ENCODE measurements at regions of chr18 and their contacts with region 1.

Region 1: GRCh38 chr18:55763298-55763697 is 175.3 kb upstream of the TCF4 start:
- DNase-seq: no peak
- H3K4me3 ChIP-seq: no peak overlapping the region
- CTCF ChIP-seq: no peak

Region 2: GRCh38 chr18:55706898-55707297 is 56.4 kb before region 1 on chr18:
- in situ Hi-C with region 1: loop called (anchors 5 kb)
- DNase-seq: no peak
- H3K4me3 ChIP-seq: no peak overlapping the region
- CTCF ChIP-seq: no peak

Region 3: GRCh38 chr18:55811925-55812324 is 48.6 kb after region 1 on chr18:
- in situ Hi-C with region 1: no loop called
- DNase-seq: no peak
- H3K4me3 ChIP-seq: no peak overlapping the region
- CTCF ChIP-seq: no peak

Region 4: DNA sequence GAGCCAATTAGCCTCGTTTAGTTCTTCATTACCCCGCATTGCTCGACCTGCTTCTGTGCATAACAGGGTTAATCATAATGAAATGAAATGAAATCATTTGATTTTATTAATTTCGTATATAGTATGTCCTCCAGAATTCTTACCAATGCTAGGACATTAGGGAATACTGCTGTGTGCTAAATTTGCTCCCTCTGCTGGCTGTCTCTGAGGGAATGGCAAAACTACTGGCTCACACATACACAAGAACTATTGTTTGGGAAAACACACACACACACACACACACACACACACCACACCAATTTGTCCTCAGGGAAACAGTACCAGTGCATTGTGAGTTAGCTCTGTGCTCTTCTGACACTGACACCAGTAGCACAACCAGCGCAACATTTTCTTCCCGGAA is 98.0 kb after region 1 on chr18:
- in situ Hi-C with region 1: no loop called
- DNase-seq: no peak
- H3K4me3 ChIP-seq: no peak overlapping the region
- CTCF ChIP-seq: peak; percentile 67

Measured in astrocyte of the cerebellum (primary cell).